ENCODE measurements at regions of chr1 and their contacts with region 1.

Region 1: DNA sequence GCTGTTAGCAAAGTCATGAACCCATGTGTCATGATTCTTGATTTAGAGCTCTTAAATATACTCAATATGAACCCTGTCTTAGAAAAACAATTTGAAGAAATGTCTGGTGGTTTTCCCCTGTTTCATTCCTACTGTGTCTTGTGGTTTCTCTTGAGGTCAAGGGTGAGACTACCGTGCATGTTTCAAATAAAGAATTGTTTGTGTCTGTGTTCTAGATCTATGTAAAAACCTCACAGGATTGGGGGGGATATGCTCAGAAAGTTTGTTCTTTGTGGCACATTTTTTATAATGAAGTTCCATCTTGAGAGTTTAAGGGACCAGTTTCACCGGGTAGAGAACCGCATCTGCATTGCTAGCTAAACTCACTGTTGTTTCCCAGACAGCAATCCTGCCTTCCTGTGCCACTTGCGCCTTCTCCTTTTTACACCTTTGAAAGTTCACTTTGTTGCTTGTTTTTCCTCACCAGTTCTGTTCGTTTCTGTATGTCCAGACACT is 30.9 kb upstream of the CACYBP start:
- DNase-seq: peak; percentile 79
- ATAC-seq: peak; percentile 78
- H3K4me3 ChIP-seq: no peak overlapping the region
- H3K27ac ChIP-seq: no peak overlapping the region
- H3K4me1 ChIP-seq: peaks cover 36% of the 10 kb centered on the region
- H3K27me3 ChIP-seq: no peaks in the 10 kb centered on the region
- CTCF ChIP-seq: no peak
- EP300 ChIP-seq: peak; percentile 93 to 95
- POLR2A ChIP-seq: no peak
- RAD21 ChIP-seq: no peak

Region 2: GRCh38 chr1:174800216-174800851 is 168.5 kb before region 1 on chr1:
- CTCF ChIA-PET with region 1: interaction called, 3 read pairs
- POLR2A ChIA-PET with region 1: interaction called, 8 read pairs
- RAD21 ChIA-PET with region 1: interaction called, 13 read pairs
- SMC1A ChIA-PET with region 1: interaction called, 10 read pairs
- in situ Hi-C with region 1: no loop called
- intact Hi-C with region 1: no loop called
- DNase-seq: no peak
- ATAC-seq: peak; percentile 21
- H3K4me3 ChIP-seq: peak overlapping the region; percentile 79
- H3K27ac ChIP-seq: peak overlapping the region; percentile 77
- H3K4me1 ChIP-seq: peaks cover 23% of the 10 kb centered on the region
- H3K27me3 ChIP-seq: no peaks in the 10 kb centered on the region
- CTCF ChIP-seq: no peak
- EP300 ChIP-seq: no peak
- POLR2A ChIP-seq: no peak
- RAD21 ChIP-seq: no peak

Region 3: GRCh38 chr1:174841747-174842146 is 127.0 kb before region 1 on chr1:
- CTCF ChIA-PET with region 1: no interaction called
- POLR2A ChIA-PET with region 1: no interaction called
- RAD21 ChIA-PET with region 1: no interaction called
- SMC1A ChIA-PET with region 1: no interaction called
- in situ Hi-C with region 1: no loop called
- intact Hi-C with region 1: no loop called
- DNase-seq: no peak
- ATAC-seq: peak; percentile 44; the same call in 2 of the 3 replicates
- H3K4me3 ChIP-seq: no peak overlapping the region
- H3K27ac ChIP-seq: no peak overlapping the region
- H3K4me1 ChIP-seq: no peaks in the 10 kb centered on the region
- H3K27me3 ChIP-seq: no peaks in the 10 kb centered on the region
- CTCF ChIP-seq: no peak
- EP300 ChIP-seq: no peak; a peak in 1 of 4 replicates
- POLR2A ChIP-seq: no peak
- RAD21 ChIP-seq: no peak

Region 4: DNA sequence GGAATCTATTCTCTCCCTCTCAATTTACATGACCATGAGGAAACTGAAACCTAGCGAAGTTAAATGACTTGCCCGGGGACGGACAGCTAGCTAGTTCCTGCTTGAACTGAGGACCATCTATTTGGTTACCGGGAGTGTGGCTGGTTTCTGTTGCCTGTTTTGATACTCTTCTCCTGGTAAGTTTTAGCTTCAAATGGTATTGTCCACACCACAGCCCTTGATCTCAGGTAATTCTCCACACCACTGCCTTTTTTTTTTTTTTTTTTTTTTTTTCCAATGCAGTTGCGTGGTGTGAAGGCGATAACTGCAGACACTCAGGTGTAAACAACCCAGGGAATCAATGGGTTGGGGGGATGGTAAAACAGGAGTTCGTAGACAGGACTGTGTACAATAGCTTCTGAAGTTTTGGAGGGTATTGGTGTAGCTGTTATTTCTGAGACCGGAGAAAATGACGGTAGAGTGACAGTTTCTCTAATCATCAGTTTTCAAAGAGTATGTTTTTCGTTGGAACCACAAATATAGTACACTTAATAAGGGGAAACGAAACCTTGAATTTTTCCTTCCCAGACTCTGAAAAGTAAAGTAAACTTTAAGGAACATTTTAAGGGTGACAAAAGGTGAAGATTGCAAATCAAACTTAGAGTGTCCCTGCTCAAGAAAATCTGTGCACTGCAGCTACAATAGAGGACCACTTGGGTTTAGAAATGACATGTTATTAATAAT is 94.3 kb before region 1 on chr1:
- CTCF ChIA-PET with region 1: interaction called, 5 read pairs
- POLR2A ChIA-PET with region 1: interaction called, 5 read pairs
- RAD21 ChIA-PET with region 1: interaction called, 31 read pairs
- SMC1A ChIA-PET with region 1: interaction called, 10 read pairs
- in situ Hi-C with region 1: no loop called
- intact Hi-C with region 1: no loop called
- DNase-seq: peak; percentile 40
- ATAC-seq: peak; percentile 83
- H3K4me3 ChIP-seq: peak overlapping the region; percentile 54; the same call in 1 of the 2 replicates
- H3K27ac ChIP-seq: peak overlapping the region; percentile 47
- H3K4me1 ChIP-seq: peaks cover 25% of the 10 kb centered on the region
- H3K27me3 ChIP-seq: no peaks in the 10 kb centered on the region
- CTCF ChIP-seq: no peak
- EP300 ChIP-seq: no peak
- POLR2A ChIP-seq: no peak
- RAD21 ChIP-seq: no peak

Region 5: DNA sequence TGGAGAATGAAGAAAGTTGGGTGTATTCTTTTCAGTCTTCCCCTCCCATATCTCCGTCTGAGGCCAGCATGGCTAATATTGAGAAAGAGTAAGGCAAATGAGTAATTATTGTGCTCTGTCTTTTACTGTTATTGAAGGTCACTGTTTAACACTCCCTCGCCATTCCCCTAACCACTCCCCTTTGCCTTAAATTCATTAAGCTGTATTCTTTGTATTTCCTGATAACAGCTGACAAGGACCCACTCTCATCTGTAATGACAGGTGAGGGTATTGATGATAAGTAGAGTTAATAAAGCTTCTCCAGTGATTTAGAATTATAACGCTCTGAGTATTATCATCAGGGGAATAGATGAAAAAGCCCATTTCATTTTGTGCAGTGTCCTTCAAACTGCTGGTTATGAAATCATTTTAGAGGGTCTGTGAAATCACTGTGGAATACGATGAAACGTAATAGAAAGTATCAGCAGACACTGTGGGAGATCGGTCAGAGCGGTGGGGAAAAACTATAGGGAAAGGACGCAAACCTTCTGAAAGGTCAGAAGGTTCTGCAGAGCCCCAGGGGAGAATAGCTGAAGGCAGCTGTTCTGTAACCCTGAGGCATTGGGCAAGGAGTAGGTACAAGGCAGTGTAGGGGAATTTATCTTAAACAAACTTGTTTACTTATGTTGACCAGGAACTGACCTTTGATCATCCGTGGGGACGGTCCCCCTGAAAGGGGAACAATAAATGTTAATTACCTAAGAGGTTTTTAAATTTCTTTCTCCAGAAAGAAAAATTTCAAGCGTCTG is 15.3 kb before region 1 on chr1:
- CTCF ChIA-PET with region 1: interaction called, 16 read pairs
- POLR2A ChIA-PET with region 1: interaction called, 74 read pairs
- RAD21 ChIA-PET with region 1: interaction called, 59 read pairs
- SMC1A ChIA-PET with region 1: interaction called, 81 read pairs
- in situ Hi-C with region 1: no loop called
- intact Hi-C with region 1: loop called (anchors 2 kb)
- DNase-seq: no peak
- ATAC-seq: peak; percentile 80
- H3K4me3 ChIP-seq: peak overlapping the region; percentile 59; the same call in 1 of the 2 replicates
- H3K27ac ChIP-seq: peak overlapping the region; percentile 48
- H3K4me1 ChIP-seq: peaks cover 25% of the 10 kb centered on the region
- H3K27me3 ChIP-seq: no peaks in the 10 kb centered on the region
- CTCF ChIP-seq: no peak
- EP300 ChIP-seq: peak; percentile 53 to 78; a peak in 2 of 4 replicates
- POLR2A ChIP-seq: no peak
- RAD21 ChIP-seq: no peak

Region 6: GRCh38 chr1:174990382-174990999 is 21.7 kb after region 1 on chr1:
- CTCF ChIA-PET with region 1: interaction called, 6 read pairs
- POLR2A ChIA-PET with region 1: interaction called, 4 read pairs
- RAD21 ChIA-PET with region 1: interaction called, 8 read pairs
- SMC1A ChIA-PET with region 1: interaction called, 10 read pairs
- in situ Hi-C with region 1: no loop called
- intact Hi-C with region 1: no loop called
- DNase-seq: no peak
- ATAC-seq: peak; percentile 75
- H3K4me3 ChIP-seq: peak overlapping the region; percentile 50
- H3K27ac ChIP-seq: peak overlapping the region; percentile 73
- H3K4me1 ChIP-seq: peaks cover 17% of the 10 kb centered on the region
- H3K27me3 ChIP-seq: no peaks in the 10 kb centered on the region
- CTCF ChIP-seq: no peak
- EP300 ChIP-seq: no peak
- POLR2A ChIP-seq: no peak
- RAD21 ChIP-seq: no peak

Region 7: GRCh38 chr1:175099916-175100315 is 131.1 kb after region 1 on chr1:
- CTCF ChIA-PET with region 1: no interaction called
- POLR2A ChIA-PET with region 1: no interaction called
- RAD21 ChIA-PET with region 1: no interaction called
- SMC1A ChIA-PET with region 1: no interaction called
- in situ Hi-C with region 1: no loop called
- intact Hi-C with region 1: no loop called
- DNase-seq: no peak
- ATAC-seq: no peak
- H3K4me3 ChIP-seq: no peak overlapping the region
- H3K27ac ChIP-seq: no peak overlapping the region
- H3K4me1 ChIP-seq: no peaks in the 10 kb centered on the region
- H3K27me3 ChIP-seq: no peaks in the 10 kb centered on the region
- CTCF ChIP-seq: no peak
- EP300 ChIP-seq: no peak
- POLR2A ChIP-seq: no peak
- RAD21 ChIP-seq: no peak

Region 8: DNA sequence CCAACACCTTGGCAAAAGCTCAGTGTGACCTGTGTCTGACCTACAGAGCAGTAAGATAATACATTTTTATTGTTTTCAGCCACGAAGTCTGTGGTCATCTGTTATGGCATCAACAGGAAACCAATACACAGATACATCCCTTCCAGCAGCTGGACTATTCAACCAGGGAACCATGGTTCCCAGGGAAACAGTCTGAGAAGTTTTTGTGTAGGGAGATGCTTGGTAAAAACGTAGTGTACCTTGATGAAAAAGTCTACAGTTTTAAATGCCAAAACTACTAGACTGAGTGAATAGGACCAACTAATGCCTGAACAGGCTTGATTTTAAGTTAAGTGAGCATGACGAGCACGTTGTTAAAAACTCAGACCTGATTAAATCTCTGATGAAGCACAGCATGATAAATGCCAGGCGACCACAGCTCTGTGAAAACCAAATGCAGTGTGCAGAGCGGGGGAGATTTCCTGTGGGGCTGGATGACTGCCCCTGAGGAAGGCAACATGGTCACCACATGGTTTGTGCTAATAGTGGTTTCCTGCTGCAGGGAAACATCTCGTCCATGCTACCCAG is 545.7 kb after region 1 on chr1:
- CTCF ChIA-PET with region 1: no interaction called
- POLR2A ChIA-PET with region 1: no interaction called
- RAD21 ChIA-PET with region 1: no interaction called
- SMC1A ChIA-PET with region 1: no interaction called
- in situ Hi-C with region 1: no loop called
- intact Hi-C with region 1: no loop called
- DNase-seq: no peak
- ATAC-seq: peak; percentile 37; the same call in 2 of the 3 replicates
- H3K4me3 ChIP-seq: no peak overlapping the region
- H3K27ac ChIP-seq: no peak overlapping the region
- H3K4me1 ChIP-seq: no peaks in the 10 kb centered on the region
- H3K27me3 ChIP-seq: no peaks in the 10 kb centered on the region; a peak in 1 of 4 replicates
- CTCF ChIP-seq: no peak
- EP300 ChIP-seq: no peak
- POLR2A ChIP-seq: no peak
- RAD21 ChIP-seq: no peak